SK-N-SH (cell line): ENCODE measurements at regions of chr1 and their contacts with region 1.

Region 1: GRCh38 chr1:27044613-27045151 is 32.0 kb upstream of the TENT5B start:
- DNase-seq: peak; percentile 82
- H3K4me3 ChIP-seq: no peak overlapping the region; a peak in 1 of 4 replicates
- H3K27ac ChIP-seq: no peak overlapping the region
- H3K4me1 ChIP-seq: no peaks in the 10 kb centered on the region
- H3K27me3 ChIP-seq: no peaks in the 10 kb centered on the region
- CTCF ChIP-seq: peak; percentile 95
- EP300 ChIP-seq: no peak
- RAD21 ChIP-seq: peak; percentile 96

Region 2: GRCh38 chr1:26900001-26900814 is 144.5 kb before region 1 on chr1 and contains the start of gene GPATCH3:
- CTCF ChIA-PET with region 1: no interaction called
- POLR2A ChIA-PET with region 1: no interaction called
- DNase-seq: peak; percentile 90
- H3K4me3 ChIP-seq: peak within 1 kb of the TSS; percentile 84 to 97
- H3K27ac ChIP-seq: peak within 1 kb of the TSS; percentile 68 to 80
- H3K4me1 ChIP-seq: peaks cover 4 to 9% of the 10 kb centered on the region in 2 experiments; a peak in 3 of 4 replicates
- H3K27me3 ChIP-seq: no peaks in the 10 kb centered on the region
- CTCF ChIP-seq: no peak
- EP300 ChIP-seq: no peak
- RAD21 ChIP-seq: no peak
- polyA plus RNA-seq, gene GPATCH3: 9.1 and 11.1 TPM in 2 replicates

Region 3: GRCh38 chr1:26998429-26999300 is 46.0 kb before region 1 on chr1:
- CTCF ChIA-PET with region 1: interaction called, 26 read pairs
- POLR2A ChIA-PET with region 1: no interaction called
- DNase-seq: no peak
- H3K4me3 ChIP-seq: no peak overlapping the region
- H3K27ac ChIP-seq: peak overlapping the region in 1 of 2 experiments; percentile 92; a peak in 2 of 4 replicates
- H3K4me1 ChIP-seq: peaks cover 8 to 30% of the 10 kb centered on the region in 2 experiments; a peak in 3 of 4 replicates
- H3K27me3 ChIP-seq: no peaks in the 10 kb centered on the region
- CTCF ChIP-seq: no peak
- EP300 ChIP-seq: no peak
- RAD21 ChIP-seq: no peak

Region 4: DNA sequence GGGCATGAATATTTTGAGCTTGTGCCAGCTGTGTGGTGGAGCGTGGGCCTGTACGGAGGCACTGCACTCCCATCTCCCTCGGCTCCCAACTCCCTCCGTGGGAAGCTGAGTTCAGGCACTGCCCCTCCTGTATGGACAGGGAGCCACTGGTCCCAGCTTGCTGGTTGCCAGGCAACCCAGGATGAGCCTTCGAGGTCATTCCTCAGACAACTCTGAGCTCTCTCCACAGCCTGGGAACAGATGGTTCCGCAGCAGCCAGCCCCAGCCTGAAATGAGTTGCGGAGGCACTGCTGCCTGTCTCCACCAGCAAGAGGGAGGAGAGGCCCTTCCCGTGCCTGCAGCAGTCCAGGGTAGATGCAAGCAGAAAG is 26.4 kb after region 1 on chr1:
- CTCF ChIA-PET with region 1: interaction called, 98 read pairs
- POLR2A ChIA-PET with region 1: no interaction called
- DNase-seq: peak; percentile 86
- H3K4me3 ChIP-seq: no peak overlapping the region
- H3K27ac ChIP-seq: no peak overlapping the region
- H3K4me1 ChIP-seq: peaks cover 0 to 11% of the 10 kb centered on the region in 2 experiments; a peak in 1 of 4 replicates
- H3K27me3 ChIP-seq: no peaks in the 10 kb centered on the region
- CTCF ChIP-seq: no peak
- EP300 ChIP-seq: no peak
- RAD21 ChIP-seq: no peak

Region 5: GRCh38 chr1:27111626-27112573 is 67.2 kb after region 1 on chr1:
- CTCF ChIA-PET with region 1: interaction called, 59 read pairs
- POLR2A ChIA-PET with region 1: no interaction called
- DNase-seq: peak; percentile 63
- H3K4me3 ChIP-seq: no peak overlapping the region
- H3K27ac ChIP-seq: peak overlapping the region; percentile 34 to 83
- H3K4me1 ChIP-seq: peaks cover 9 to 17% of the 10 kb centered on the region in 2 experiments; a peak in 3 of 4 replicates
- H3K27me3 ChIP-seq: no peaks in the 10 kb centered on the region
- CTCF ChIP-seq: peak; percentile 54
- EP300 ChIP-seq: peak in 1 of 2 experiments; percentile 47; a peak in 1 of 4 replicates
- RAD21 ChIP-seq: peak; percentile 70

Region 6: DNA sequence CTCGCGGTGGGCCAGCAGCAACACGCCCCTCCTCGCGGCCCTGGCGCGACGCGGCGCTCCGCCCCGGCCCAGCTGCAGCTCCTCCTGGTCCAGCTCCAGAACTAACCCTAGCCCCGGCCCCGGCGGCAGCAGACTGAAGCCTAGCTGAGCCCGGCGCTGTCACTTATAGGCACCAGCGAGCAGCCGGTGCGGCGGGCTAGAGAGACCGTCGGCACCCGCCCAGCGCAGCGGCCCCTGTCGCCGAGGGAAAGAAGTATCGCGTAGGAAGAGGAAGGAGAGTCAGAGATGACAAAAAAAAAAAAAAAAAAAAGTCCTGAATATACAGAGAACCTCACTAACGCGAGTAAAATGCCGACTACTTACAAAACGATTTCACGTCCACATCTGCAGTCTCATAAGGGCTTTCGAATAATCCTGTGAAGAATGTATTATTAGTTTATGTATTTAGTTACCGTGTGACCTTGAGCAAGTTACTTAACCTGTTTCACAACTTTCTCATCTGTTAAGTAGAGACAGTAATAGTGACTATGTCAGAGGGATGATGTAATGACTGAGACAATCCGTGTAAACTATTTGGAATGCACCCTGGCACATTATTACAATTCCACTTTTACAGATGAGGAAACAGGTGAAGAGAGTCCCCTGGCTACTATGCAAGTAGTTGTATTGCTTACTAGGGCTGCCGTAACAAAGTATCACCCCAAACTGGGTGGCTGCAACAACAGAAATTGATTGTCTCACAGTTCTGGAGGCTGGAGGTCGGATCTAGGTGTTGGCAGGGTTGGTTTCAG is 110.5 kb after region 1 on chr1 and contains the start of gene SLC9A1:
- CTCF ChIA-PET with region 1: interaction called, 10 read pairs
- POLR2A ChIA-PET with region 1: no interaction called
- DNase-seq: peak; percentile 94
- H3K4me3 ChIP-seq: peak within 1 kb of the TSS; percentile 69 to 72
- H3K27ac ChIP-seq: peak within 1 kb of the TSS; percentile 34 to 59; a peak in 3 of 4 replicates
- H3K4me1 ChIP-seq: peaks cover 17 to 40% of the 10 kb centered on the region in 2 experiments; a peak in 2 of 4 replicates
- H3K27me3 ChIP-seq: no peaks in the 10 kb centered on the region
- CTCF ChIP-seq: peak; percentile 79
- EP300 ChIP-seq: peak in 1 of 2 experiments; percentile 42; a peak in 1 of 4 replicates
- RAD21 ChIP-seq: peak; percentile 27; the same call in 1 of the 2 replicates
- polyA plus RNA-seq, gene SLC9A1: 5.6 and 11.4 TPM in 2 replicates

Region 7: GRCh38 chr1:27300341-27301051 is 255.8 kb after region 1 on chr1:
- CTCF ChIA-PET with region 1: interaction called, 79 read pairs
- POLR2A ChIA-PET with region 1: no interaction called
- DNase-seq: peak; percentile 90
- H3K4me3 ChIP-seq: peak overlapping the region; percentile 12 to 14; a peak in 2 of 4 replicates
- H3K27ac ChIP-seq: peak overlapping the region; percentile 92 to 99
- H3K4me1 ChIP-seq: peaks cover 28 to 52% of the 10 kb centered on the region in 2 experiments
- H3K27me3 ChIP-seq: no peaks in the 10 kb centered on the region
- CTCF ChIP-seq: peak; percentile 92
- EP300 ChIP-seq: peak; percentile 40 to 70; a peak in 3 of 4 replicates
- RAD21 ChIP-seq: peak; percentile 96

Region 8: DNA sequence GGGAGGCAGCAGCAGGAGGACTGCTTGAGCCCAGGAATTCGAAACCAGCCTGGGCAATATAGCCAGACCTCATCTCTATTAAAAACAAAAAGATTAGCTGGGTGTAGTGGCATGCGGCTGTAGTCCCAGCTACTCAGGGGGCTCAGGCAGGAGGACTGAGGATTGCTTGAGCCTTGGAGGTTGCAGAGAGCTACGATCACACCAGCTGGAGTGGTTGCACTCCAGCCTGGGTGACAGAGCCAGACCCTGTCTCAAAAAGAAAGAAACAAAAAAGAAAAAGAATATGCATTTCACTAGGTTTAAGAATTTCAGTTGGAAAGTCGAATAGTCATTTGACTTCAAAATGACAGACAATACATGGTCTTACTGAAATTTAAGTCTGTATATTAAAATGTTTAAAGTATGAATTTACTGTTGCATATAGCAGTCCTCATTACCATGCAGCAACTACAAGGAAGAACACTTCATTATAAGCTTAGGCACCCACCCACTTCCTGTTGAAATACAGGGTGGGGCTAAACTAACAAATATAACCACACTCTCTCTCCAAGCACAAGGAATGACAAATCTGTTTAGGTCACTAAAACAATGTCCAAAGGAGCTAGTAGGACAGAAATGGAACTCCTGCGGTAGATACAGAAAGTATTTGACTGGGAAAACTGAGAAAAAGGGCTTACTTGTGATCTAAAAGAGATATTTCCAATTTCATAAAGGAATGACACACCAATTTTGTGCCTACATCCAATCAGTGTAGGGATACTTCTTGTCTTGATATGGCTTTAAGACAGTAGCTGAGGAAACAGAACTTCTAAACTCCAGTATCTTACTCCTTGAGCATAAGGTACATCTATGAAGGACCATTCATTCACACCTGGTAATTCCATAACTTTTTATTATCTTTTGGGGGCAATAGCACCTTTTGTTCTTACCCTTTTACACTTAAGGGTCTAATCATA is 391.8 kb after region 1 on chr1:
- CTCF ChIA-PET with region 1: no interaction called
- POLR2A ChIA-PET with region 1: no interaction called
- DNase-seq: no peak
- H3K4me3 ChIP-seq: no peak overlapping the region
- H3K27ac ChIP-seq: peak overlapping the region in 1 of 2 experiments; percentile 39; a peak in 1 of 4 replicates
- H3K4me1 ChIP-seq: peaks cover 0 to 23% of the 10 kb centered on the region in 2 experiments; a peak in 1 of 4 replicates
- H3K27me3 ChIP-seq: no peaks in the 10 kb centered on the region
- CTCF ChIP-seq: no peak
- EP300 ChIP-seq: no peak
- RAD21 ChIP-seq: no peak